Right ventricle myocardium inferior (tissue), 1 donor: ENCODE measurements at regions of chr7 and their contacts with region 1.

Region 1: GRCh38 chr7:1044191-1045068 is at the start of gene GPR146:
- DNase-seq: peak; percentile 99
- ATAC-seq: peak; percentile 97
- total RNA-seq, gene GPR146: 30.6 TPM

Region 2: DNA sequence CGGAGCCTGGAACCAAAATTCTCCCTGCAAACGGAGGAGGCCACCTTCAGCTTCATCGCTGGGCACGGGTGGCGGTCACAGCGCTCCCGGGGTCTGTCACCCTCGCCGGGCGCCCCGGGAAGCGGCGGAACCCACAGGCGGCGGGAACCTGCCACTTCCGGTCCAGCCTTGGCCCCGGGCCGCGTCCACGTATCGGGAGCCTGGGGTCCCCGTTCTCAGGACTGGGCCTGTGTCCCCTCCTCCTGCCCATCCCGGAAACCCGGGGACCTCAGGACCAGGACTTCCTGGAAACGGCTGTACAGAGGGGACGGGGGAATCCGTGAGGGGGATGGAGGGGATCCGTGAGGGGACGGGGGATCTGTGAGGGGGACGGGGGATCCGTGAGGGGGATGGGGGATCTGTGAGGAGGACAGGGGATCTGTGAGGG is 550.2 kb before region 1 on chr7:
- intact Hi-C with region 1: no loop called
- DNase-seq: peak; percentile 9
- ATAC-seq: no peak

Region 3: DNA sequence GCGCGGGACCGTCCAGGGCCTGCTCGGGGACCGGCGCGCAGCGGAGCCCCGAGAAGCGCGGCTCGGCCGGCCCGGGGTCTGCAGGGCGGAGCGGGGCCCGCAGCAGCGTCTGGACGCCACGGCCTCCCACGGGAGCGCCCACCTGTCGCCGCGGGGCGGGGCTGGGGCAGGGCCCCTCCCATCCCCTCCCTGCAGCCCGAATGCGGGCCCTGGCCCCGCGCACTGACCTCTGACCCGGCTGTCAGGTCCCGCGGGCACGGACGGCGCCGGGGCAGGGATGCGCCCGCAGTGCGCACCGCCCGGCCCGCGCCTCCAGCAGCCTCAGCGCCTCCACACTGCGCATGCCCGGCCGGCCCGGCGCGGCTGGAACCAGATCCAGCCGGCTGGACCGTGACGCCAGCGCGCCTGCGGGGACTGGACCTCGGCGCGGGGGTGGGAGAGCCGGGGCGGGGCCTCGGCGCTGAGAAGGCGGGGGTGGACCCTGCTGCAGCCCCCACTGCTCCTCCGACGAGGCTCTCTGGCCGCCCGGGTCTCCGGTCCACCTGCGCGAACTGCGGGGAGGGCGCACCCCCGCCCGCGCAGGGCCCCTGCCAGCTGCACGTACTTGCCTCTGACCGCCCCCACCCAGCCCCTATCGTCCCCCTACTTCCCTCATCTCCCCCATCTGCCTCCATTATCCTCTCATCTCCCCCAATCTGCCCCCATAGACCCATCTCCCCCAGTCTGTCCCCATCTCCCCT is 16.2 kb before region 1 on chr7:
- intact Hi-C with region 1: loop called (anchors 2 kb)
- DNase-seq: peak; percentile 95
- ATAC-seq: peak; percentile 93